MCF 10A (cell line): ENCODE measurements at regions of chr17 and their contacts with region 1.

Region 1: DNA sequence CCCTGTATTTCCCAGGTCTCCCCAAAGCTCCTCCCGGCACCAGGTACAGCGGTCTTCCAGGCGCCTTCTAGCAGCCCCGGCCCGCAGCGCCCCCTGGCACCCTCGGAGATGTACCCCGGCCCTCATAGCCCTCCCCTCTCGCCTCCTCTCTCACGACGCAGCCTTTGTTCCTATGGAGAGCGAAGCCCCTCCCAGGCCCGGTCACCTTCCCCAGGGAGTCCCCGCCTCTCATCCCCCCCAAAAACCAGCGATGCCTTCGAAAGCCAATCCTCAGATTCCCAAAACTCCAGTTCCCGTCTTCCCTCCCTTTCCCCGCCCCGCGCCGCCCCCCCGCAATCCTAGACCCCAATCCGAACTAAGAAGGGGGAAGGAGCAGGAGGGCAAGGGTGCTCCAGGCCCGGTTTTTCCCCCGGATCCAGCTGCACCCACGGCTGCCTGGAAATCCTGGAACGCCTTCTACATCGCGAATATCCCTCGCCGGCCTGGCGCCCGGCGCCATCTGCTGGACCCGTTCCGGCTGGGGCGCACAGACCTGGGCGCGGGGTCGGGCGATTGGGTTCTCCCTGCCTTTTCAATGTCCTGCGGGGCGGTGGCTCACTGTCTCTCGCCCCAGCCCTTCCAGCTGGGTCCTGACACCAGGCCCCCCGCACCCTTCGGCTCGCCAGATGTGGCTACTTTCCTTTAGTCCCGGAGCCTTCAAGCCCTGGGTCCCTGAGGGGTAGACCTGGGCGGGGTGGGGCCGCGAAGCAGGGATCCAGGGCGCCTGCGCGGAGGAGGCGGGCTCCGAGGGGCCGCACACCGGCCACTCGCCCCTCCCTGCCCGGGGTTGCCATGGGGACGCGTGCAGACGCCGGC is at the start of gene DNAH2:
- DNase-seq: peak; percentile 88
- H3K4me3 Mint-ChIP-seq: peak within 1 kb of the TSS; percentile 78
- H3K27ac Mint-ChIP-seq: no peak within 1 kb of the TSS
- H3K4me1 Mint-ChIP-seq: peaks cover 9% of the 10 kb centered on the region
- H3K27me3 Mint-ChIP-seq: peaks cover 54% of the 10 kb centered on the region
- CTCF ChIP-seq: peak; percentile 42
- total RNA-seq, gene DNAH2: 0.05 and 0.12 TPM in 2 replicates

Region 2: GRCh38 chr17:7703584-7704479 is 13.3 kb before region 1 on chr17:
- CTCF ChIA-PET with region 1: interaction called, 11 read pairs
- POLR2A ChIA-PET with region 1: interaction called, 18 read pairs
- intact Hi-C with region 1: no loop called
- DNase-seq: no peak
- H3K4me3 Mint-ChIP-seq: peak overlapping the region; percentile 76
- H3K27ac Mint-ChIP-seq: no peak overlapping the region
- H3K4me1 Mint-ChIP-seq: peaks cover 6% of the 10 kb centered on the region
- H3K27me3 Mint-ChIP-seq: peaks cover 23% of the 10 kb centered on the region
- CTCF ChIP-seq: no peak

Region 3: GRCh38 chr17:7972131-7972785 is 255.1 kb after region 1 on chr17:
- CTCF ChIA-PET with region 1: no interaction called
- POLR2A ChIA-PET with region 1: no interaction called
- intact Hi-C with region 1: no loop called
- DNase-seq: no peak
- H3K4me3 Mint-ChIP-seq: no peak overlapping the region
- H3K27ac Mint-ChIP-seq: no peak overlapping the region
- H3K4me1 Mint-ChIP-seq: no peaks in the 10 kb centered on the region
- H3K27me3 Mint-ChIP-seq: no peaks in the 10 kb centered on the region
- CTCF ChIP-seq: no peak